Gastrocnemius medialis (tissue), 4 donors: ENCODE measurements at regions of chr1 and their contacts with region 1.

Region 1: DNA sequence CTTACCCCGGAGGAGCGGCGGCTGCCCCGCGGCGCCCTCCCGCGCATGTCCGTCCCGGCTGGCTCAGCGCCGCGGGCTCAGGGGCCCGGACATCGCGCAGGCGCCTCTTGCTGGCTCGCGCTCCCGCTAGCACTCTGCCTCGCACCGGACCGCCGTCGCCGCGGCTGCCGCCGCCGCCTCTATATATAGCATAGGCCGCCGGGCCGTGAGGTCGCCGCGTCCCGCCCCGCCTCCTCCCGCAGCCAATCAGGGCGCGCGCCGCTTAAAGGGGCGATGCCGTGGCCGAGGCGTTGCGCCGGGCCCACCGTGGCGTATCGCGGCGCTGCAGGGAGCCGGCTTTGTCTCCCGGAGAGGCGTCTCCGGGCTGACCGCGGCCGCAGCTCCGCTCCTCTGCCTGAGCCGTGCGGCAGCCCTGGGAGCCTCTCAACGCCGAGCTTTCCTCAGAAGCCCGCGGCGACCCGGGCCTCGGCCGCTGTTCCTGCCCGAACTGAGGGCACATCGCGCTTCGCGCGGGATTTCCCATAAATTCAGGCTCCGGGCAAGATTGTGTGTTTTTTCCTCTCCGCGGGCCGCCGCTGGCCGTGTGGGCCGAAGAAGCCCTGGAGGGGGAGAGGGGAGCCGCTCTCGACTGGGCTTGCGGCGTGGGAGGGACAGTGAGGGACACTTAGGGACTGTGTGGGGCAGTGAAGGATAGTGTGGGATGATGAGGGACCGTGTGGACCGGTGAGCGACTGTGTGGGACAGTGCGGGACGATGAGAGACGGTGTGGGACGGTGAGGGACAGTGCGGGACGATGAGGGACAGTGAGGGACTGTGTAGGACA is at the start of gene ERRFI1:
- DNase-seq: peak; percentile 89 to 95
- ATAC-seq: peak; percentile 81 to 84
- H3K4me3 ChIP-seq: peak within 1 kb of the TSS; percentile 77 to 96 (median 83)
- H3K27ac ChIP-seq: peak within 1 kb of the TSS; percentile 87 to 98 (median 94)
- H3K4me1 ChIP-seq: peaks cover 41 to 49% of the 10 kb centered on the region in 2 donors
- H3K27me3 ChIP-seq: no peaks in the 10 kb centered on the region
- CTCF ChIP-seq: peak in 3 of 5 experiments; percentile 5 to 17 (median 9)
- POLR2A ChIP-seq: peak; percentile 99 to 100
- total RNA-seq, gene ERRFI1: 184 to 644 (median 448) TPM

Region 2: GRCh38 chr1:7930645-7931445 is 95.5 kb before region 1 on chr1:
- in situ Hi-C with region 1: no loop called
- intact Hi-C with region 1: no loop called
- DNase-seq: no peak
- ATAC-seq: no peak
- H3K4me3 ChIP-seq: no peak overlapping the region
- H3K27ac ChIP-seq: no peak overlapping the region
- H3K4me1 ChIP-seq: no peaks in the 10 kb centered on the region
- H3K27me3 ChIP-seq: peaks cover 0 to 20% (median 11%) of the 10 kb centered on the region in 3 donors
- CTCF ChIP-seq: no peak
- POLR2A ChIP-seq: no peak

Region 3: GRCh38 chr1:7975212-7975865 is 51.0 kb before region 1 on chr1:
- in situ Hi-C with region 1: loop called in 2 of 4 experiments (anchors 5 to 10 kb)
- intact Hi-C with region 1: loop called (anchors 2 kb)
- DNase-seq: peak; percentile 61 to 77
- ATAC-seq: peak; percentile 91 to 98
- H3K4me3 ChIP-seq: no peak overlapping the region
- H3K27ac ChIP-seq: peak overlapping the region; percentile 51 to 85 (median 68)
- H3K4me1 ChIP-seq: peaks cover 17 to 30% of the 10 kb centered on the region in 2 donors
- H3K27me3 ChIP-seq: no peaks in the 10 kb centered on the region
- CTCF ChIP-seq: peak; percentile 82 to 92 (median 88)
- POLR2A ChIP-seq: no peak

Region 4: DNA sequence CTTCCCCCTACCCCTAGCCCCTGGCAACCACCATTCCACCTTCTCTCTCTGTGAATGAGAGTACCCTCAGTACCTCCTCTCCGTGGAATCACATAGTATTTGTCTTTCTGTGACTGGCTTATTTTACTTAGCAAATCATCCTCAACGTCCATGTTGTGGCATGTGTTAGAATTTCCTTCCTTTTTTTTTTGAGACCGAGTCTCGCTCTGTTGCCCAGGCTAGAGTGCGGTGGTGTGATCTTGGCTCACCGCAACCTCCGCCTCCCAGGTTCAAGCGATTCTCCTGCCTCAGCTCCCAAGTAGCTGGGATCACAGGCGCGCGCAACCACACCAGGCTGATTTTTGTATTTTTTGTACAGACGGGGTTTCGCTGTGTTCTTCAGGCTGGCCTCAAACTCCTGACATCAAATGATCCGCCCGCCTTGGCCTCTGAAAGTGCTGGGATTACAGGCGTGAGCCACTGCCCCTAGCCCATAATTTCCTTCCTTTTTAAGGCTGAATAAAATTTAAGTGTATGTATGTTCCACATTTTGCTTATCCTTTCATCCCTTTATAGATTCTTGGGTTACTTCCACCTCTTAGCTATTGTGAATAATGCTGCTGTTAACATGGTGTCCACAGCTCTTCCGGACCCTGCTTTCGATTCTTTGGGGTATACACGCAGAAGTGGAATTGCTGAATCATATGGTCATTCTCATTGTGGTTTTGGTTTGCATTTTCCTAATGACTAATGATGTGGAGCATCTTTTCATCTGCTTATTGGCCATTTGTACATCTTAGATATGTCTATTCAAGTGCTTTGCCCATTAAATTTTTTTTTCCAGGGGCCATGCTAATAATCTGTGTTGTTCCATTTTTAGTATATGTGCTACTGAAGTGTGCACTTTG is 32.5 kb before region 1 on chr1:
- in situ Hi-C with region 1: no loop called
- intact Hi-C with region 1: no loop called
- DNase-seq: no peak
- ATAC-seq: no peak
- H3K4me3 ChIP-seq: no peak overlapping the region
- H3K27ac ChIP-seq: no peak overlapping the region
- H3K4me1 ChIP-seq: no peaks in the 10 kb centered on the region
- H3K27me3 ChIP-seq: no peaks in the 10 kb centered on the region
- CTCF ChIP-seq: no peak
- POLR2A ChIP-seq: no peak

Region 5: GRCh38 chr1:8169364-8170058 is 143.1 kb after region 1 on chr1:
- in situ Hi-C with region 1: no loop called
- intact Hi-C with region 1: loop called (anchors 5 kb)
- DNase-seq: peak; percentile 71 to 74
- ATAC-seq: peak; percentile 85 to 90
- H3K4me3 ChIP-seq: no peak overlapping the region
- H3K27ac ChIP-seq: peak overlapping the region; percentile 52 to 79 (median 72)
- H3K4me1 ChIP-seq: peaks cover 28 to 40% of the 10 kb centered on the region in 2 donors
- H3K27me3 ChIP-seq: no peaks in the 10 kb centered on the region
- CTCF ChIP-seq: peak in 1 of 5 experiments; percentile 9
- POLR2A ChIP-seq: peak in 1 of 2 donors; percentile 25

Region 6: DNA sequence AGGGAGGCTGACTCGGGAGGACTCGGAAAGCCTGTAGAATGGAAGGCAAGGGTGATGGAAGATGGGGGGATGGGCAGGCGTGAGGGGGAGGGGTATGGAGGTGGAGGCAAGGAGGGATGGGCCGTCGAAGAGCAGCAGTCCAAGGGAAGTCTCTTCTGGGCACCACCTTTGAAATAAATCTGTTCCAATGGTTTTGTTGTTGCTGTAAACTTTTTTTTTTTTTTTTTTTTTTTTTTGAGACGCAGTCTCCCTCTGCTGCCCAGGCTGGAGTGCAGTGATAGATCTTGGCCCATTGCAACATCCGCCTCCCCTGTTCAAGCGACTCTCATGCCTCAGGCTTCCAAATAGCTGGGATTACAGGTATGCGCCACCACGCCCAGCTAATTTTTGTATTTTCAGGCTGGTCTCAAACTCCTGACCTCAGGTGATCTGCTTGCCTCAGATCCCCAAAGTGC is 212.5 kb after region 1 on chr1:
- in situ Hi-C with region 1: loop called in 1 of 4 experiments (anchors 10 kb)
- intact Hi-C with region 1: loop called (anchors 5 kb)
- DNase-seq: peak; percentile 18 to 43
- ATAC-seq: peak; percentile 41 to 55
- H3K4me3 ChIP-seq: no peak overlapping the region
- H3K27ac ChIP-seq: no peak overlapping the region
- H3K4me1 ChIP-seq: no peaks in the 10 kb centered on the region
- H3K27me3 ChIP-seq: no peaks in the 10 kb centered on the region
- CTCF ChIP-seq: peak in 1 of 5 experiments; percentile 28
- POLR2A ChIP-seq: no peak

Region 7: GRCh38 chr1:8314346-8315280 is 288.2 kb after region 1 on chr1:
- in situ Hi-C with region 1: loop called in 2 of 4 experiments (anchors 5 to 10 kb)
- intact Hi-C with region 1: loop called (anchors 1 kb)
- DNase-seq: peak; percentile 49 to 71
- ATAC-seq: peak; percentile 85 to 90
- H3K4me3 ChIP-seq: no peak overlapping the region
- H3K27ac ChIP-seq: no peak overlapping the region
- H3K4me1 ChIP-seq: peaks cover 9 to 29% of the 10 kb centered on the region in 2 donors
- H3K27me3 ChIP-seq: peaks cover 0 to 6% (median 3%) of the 10 kb centered on the region in 3 donors
- CTCF ChIP-seq: peak; percentile 90 to 95 (median 91)
- POLR2A ChIP-seq: no peak